GM12878 (cell line): ENCODE measurements at regions of chr12 and their contacts with region 1.

Region 1: DNA sequence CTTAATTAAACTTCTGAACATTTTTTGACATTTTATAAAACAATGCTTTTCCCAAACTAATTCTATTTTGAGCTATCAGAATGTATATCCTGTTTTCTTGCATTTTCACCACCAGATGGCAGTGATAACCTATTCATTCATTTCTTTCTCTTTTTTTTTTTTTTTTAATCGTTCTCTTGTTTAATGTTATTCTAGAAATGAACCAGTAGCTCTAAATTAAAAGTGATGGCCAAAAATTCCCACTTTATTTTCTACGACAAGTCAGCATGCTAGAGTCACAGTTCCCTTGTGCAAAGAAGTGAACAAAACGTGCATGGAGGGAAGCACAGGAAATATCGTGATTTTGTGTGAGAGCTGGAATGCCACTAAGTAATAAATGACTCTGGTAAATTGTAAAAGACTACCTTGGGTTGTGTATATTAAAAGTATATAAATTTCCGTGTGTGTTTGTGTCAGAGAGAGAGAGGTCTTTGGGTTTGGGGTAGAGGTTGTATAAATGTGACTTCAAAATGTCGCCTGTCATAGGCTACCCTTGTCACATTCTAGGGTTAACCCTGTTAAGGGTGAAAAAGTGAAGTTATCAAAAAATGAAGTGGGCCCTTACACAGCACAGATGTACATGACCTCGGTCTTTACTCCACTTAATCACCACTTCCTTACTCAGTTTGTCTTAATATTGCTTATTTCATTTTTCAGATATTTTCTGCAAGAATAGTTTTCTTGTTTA is 40.4 kb upstream of the LDHB start:
- DNase-seq: no peak
- ATAC-seq: no peak
- H3K4me3 ChIP-seq: no peak overlapping the region
- H3K27ac ChIP-seq: no peak overlapping the region
- H3K4me1 ChIP-seq: no peaks in the 10 kb centered on the region
- H3K27me3 ChIP-seq: no peaks in the 10 kb centered on the region
- CTCF ChIP-seq: peak; percentile 13 to 54 (median 39); a peak in 4 of 6 replicates
- EP300 ChIP-seq: no peak
- POLR2A ChIP-seq: no peak
- RAD21 ChIP-seq: peak; percentile 53

Region 2: DNA sequence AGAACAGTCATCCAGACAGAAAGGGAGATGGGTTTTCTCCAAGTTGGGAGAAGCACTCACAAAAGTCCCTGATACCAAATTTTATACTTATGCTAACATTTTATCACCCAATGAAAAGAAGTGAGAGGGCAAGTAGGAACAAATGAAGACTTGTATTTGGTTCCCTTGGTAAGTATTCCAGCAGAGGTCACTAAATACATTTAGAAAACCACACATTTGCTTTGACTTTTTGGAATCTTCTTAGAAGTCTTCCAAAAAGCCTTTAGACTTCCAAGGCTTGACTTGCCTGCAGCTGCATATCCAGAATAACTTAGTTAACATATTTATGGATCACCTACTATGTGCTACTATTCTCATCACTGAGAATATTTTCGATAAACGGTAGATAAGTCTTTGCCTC is 90.4 kb before region 1 on chr12:
- CTCF ChIA-PET with region 1: no interaction called
- POLR2A ChIA-PET with region 1: no interaction called
- RAD21 ChIA-PET with region 1: no interaction called
- SMC1A ChIA-PET with region 1: no interaction called
- in situ Hi-C with region 1: no loop called
- intact Hi-C with region 1: no loop called
- DNase-seq: no peak
- ATAC-seq: no peak
- H3K4me3 ChIP-seq: no peak overlapping the region
- H3K27ac ChIP-seq: no peak overlapping the region
- H3K4me1 ChIP-seq: no peaks in the 10 kb centered on the region
- H3K27me3 ChIP-seq: no peaks in the 10 kb centered on the region
- CTCF ChIP-seq: peak in 2 of 3 experiments; percentile 13 to 33; a peak in 3 of 6 replicates
- EP300 ChIP-seq: no peak
- POLR2A ChIP-seq: no peak
- RAD21 ChIP-seq: 0 out of 2 replicates have a peak, but pooled peaks have one; percentile 36

Region 3: DNA sequence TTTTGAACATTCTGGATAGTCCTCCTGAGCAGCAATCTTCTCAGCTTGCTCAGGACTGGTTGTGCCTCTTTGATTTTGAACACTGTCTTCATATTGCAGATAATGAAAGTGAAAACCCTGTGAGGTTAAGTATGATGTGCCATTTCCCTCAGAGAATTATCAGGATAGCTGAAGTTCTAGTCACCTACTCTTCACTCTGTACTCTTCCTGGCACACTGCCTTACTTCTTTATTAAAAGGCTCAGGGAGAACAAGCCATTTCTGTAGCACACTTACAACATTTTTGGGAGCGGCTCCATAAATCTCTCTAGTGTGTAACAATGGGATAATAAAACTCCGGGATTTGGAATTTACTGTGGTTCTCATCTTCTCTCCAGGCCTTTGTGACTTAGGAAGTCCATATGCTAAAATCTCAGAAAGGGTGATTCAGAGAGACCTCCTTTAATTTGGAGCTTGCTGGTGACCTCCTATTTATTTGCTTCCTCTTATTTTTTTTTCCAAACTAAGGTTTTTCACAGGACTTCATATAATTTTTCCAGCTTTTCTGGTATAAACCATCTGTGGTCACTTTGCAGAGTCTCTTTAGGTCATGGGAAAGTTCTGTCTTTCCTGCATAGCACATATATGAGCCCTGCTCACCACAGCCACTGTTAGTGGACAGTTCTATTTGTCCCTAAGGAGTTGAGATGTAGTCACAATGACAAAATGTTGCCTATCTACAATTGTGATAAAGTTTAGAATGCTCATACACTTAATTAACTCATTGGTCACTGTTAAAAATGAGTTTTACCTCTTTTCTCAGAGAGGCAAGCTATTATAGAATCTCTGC is 13.1 kb after region 1 on chr12:
- CTCF ChIA-PET with region 1: interaction called, 35 read pairs
- POLR2A ChIA-PET with region 1: no interaction called
- RAD21 ChIA-PET with region 1: interaction called, 8 read pairs
- SMC1A ChIA-PET with region 1: interaction called, 6 read pairs
- in situ Hi-C with region 1: no loop called
- intact Hi-C with region 1: no loop called
- DNase-seq: no peak
- ATAC-seq: peak; percentile 50; the same call in 2 of the 3 replicates
- H3K4me3 ChIP-seq: no peak overlapping the region
- H3K27ac ChIP-seq: no peak overlapping the region
- H3K4me1 ChIP-seq: no peaks in the 10 kb centered on the region
- H3K27me3 ChIP-seq: no peaks in the 10 kb centered on the region
- CTCF ChIP-seq: no peak
- EP300 ChIP-seq: no peak
- POLR2A ChIP-seq: no peak
- RAD21 ChIP-seq: no peak

Region 4: GRCh38 chr12:21989819-21990412 is 291.8 kb after region 1 on chr12:
- CTCF ChIA-PET with region 1: interaction called, 56 read pairs
- POLR2A ChIA-PET with region 1: no interaction called
- RAD21 ChIA-PET with region 1: interaction called, 30 read pairs
- SMC1A ChIA-PET with region 1: interaction called, 41 read pairs
- in situ Hi-C with region 1: loop called (anchors 10 kb)
- intact Hi-C with region 1: loop called (anchors 2 kb)
- DNase-seq: no peak
- ATAC-seq: no peak
- H3K4me3 ChIP-seq: no peak overlapping the region
- H3K27ac ChIP-seq: no peak overlapping the region
- H3K4me1 ChIP-seq: no peaks in the 10 kb centered on the region
- H3K27me3 ChIP-seq: no peaks in the 10 kb centered on the region
- CTCF ChIP-seq: peak; percentile 26 to 40 (median 30); a peak in 3 of 6 replicates
- EP300 ChIP-seq: no peak
- POLR2A ChIP-seq: no peak
- RAD21 ChIP-seq: peak; percentile 45; the same call in 1 of the 2 replicates

Region 5: GRCh38 chr12:22018860-22019259 is 320.8 kb after region 1 on chr12:
- CTCF ChIA-PET with region 1: interaction called, 48 read pairs
- POLR2A ChIA-PET with region 1: interaction called, 3 read pairs
- RAD21 ChIA-PET with region 1: interaction called, 37 read pairs
- SMC1A ChIA-PET with region 1: interaction called, 27 read pairs
- in situ Hi-C with region 1: loop called (anchors 5 kb)
- intact Hi-C with region 1: loop called (anchors 1 kb)
- DNase-seq: no peak
- ATAC-seq: no peak; the same call in 2 of the 3 replicates
- H3K4me3 ChIP-seq: no peak overlapping the region
- H3K27ac ChIP-seq: no peak overlapping the region
- H3K4me1 ChIP-seq: no peaks in the 10 kb centered on the region
- H3K27me3 ChIP-seq: no peaks in the 10 kb centered on the region
- CTCF ChIP-seq: peak in 2 of 3 experiments; percentile 11 to 31; a peak in 3 of 6 replicates
- EP300 ChIP-seq: no peak
- POLR2A ChIP-seq: no peak
- RAD21 ChIP-seq: peak; percentile 28; the same call in 1 of the 2 replicates

Region 6: DNA sequence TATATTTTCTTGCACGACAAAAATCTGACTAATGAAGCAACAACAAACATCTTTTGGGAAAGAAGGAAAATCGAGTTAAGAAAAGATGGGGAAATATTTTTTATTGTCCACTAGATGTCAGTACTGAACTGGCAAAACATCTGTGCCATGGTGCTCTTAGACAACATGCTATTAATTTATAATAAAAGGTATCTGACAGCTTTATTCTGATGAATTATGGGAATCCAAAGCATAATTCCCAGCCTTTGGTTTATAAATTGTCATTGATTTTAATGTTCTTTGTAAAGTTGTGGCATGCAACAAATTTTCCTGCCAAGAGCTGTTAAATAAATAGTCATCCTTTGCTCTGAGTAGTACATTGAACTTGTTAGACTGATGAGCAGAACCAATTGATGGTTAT is 1158.1 kb after region 1 on chr12:
- CTCF ChIA-PET with region 1: no interaction called
- POLR2A ChIA-PET with region 1: no interaction called
- RAD21 ChIA-PET with region 1: no interaction called
- SMC1A ChIA-PET with region 1: no interaction called
- in situ Hi-C with region 1: no loop called
- intact Hi-C with region 1: no loop called
- DNase-seq: no peak
- ATAC-seq: no peak
- H3K4me3 ChIP-seq: no peak overlapping the region
- H3K27ac ChIP-seq: no peak overlapping the region
- H3K4me1 ChIP-seq: no peaks in the 10 kb centered on the region
- H3K27me3 ChIP-seq: no peaks in the 10 kb centered on the region; a peak in 1 of 4 replicates
- CTCF ChIP-seq: peak; percentile 35 to 56 (median 45); a peak in 5 of 6 replicates
- EP300 ChIP-seq: no peak
- POLR2A ChIP-seq: no peak
- RAD21 ChIP-seq: peak; percentile 62